ENCODE measurements at regions of chr5 and their contacts with region 1.

Region 1: DNA sequence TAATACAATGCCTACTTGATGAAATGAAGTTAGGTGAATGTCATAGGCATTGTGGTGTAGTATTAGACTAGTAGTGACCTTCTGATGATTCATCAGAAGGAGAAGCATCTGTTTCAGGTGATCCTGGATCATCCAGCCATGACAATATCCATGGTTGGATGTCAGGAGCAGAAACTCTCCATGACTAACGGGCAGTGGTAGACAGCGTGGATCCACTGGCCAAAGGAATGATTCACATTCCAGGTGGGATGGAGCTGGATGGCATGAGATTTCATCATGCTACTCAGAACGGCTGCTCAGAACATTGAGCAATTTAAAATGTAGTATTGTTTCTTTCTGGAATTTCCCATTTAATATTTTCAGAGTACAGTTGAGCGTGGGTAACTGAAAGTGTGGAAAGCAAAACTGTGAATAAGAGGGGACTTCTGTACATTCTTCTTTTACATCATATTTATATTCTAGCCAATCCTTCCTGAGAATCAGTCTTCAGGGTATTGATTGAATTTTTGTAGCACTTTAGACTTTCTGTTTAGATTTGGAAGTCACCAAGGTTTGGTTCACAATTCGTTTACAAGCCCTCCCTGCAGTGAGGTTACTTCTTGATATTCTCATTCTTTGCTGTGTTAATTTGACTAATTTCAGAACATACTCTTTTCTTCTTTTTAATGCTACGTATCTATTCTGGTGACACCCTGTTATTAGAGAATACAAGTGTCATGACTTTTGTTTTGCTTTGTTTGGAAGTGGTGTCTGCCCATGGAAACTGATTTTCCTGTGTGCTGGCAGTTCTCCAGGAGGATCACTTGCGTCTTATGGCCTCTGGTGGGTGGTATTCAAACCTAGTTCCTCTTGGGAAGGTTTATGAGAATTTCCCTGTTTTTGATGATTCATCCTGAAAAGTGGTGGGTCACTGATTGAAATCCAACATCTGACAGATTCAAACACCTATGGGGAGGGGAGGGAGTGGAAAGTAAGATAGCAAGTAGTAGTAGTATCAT is 12.2 kb upstream of the CLINT1 start:
- DNase-seq: peak; percentile 20
- H3K4me3 Mint-ChIP-seq: no peak overlapping the region
- H3K27ac Mint-ChIP-seq: peak overlapping the region; percentile 31
- H3K4me1 Mint-ChIP-seq: peaks cover 17% of the 10 kb centered on the region
- H3K27me3 Mint-ChIP-seq: peaks cover 2% of the 10 kb centered on the region

Region 2: DNA sequence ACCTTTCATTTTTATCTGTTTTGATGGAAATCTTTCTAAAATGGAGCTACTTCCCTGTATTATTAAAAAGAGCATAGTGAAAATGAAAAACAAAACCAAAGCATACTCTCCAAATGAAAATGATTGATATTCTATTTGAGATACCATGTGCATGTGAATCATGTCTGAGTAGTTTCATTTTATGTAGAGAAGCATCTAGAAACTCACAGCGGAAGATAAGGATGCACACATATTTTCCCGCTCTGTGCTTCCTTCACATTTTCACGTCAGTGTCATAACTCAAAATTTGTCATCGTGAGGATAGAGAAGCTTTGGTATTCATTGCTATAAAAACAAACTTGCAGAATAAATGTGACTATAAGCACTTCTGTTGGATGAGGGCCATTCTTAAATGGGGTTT is 21.8 kb after region 1 on chr5:
- CTCF ChIA-PET with region 1: no interaction called
- POLR2A ChIA-PET with region 1: no interaction called
- intact Hi-C with region 1: loop called (anchors 1 kb)
- DNase-seq: peak; percentile 18
- H3K4me3 Mint-ChIP-seq: no peak overlapping the region
- H3K27ac Mint-ChIP-seq: no peak overlapping the region
- H3K4me1 Mint-ChIP-seq: peaks cover 19% of the 10 kb centered on the region
- H3K27me3 Mint-ChIP-seq: no peaks in the 10 kb centered on the region

Region 3: DNA sequence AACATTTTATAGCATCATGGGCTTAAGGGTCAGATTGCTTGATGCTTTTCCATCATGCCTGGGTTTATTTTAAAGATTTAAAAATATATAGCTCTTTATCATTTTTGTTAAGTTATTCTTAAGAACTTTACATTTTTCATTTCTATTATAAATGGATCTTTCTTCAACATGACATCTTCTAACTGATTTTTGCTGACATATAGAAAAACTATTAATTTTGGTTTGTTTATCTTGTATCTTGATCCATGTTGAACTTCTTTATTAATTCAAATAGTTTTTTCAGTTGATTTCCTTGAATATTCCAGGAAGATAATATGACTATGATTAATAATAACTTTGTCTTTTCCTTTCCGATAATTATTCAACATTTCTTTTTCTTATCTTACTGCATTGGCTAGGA is 225.7 kb after region 1 on chr5:
- CTCF ChIA-PET with region 1: no interaction called
- POLR2A ChIA-PET with region 1: no interaction called
- intact Hi-C with region 1: no loop called
- DNase-seq: no peak
- H3K4me3 Mint-ChIP-seq: no peak overlapping the region
- H3K27ac Mint-ChIP-seq: no peak overlapping the region
- H3K4me1 Mint-ChIP-seq: no peaks in the 10 kb centered on the region
- H3K27me3 Mint-ChIP-seq: peaks cover 9% of the 10 kb centered on the region